CD4-positive, alpha-beta T cell (primary cell): ENCODE measurements at regions of chr19 and their contacts with region 1.

Region 1: GRCh38 chr19:18251587-18252369 is 22.5 kb downstream of the IQCN start:
- DNase-seq: peak; percentile 65 to 90 (median 81)
- ATAC-seq: peak; percentile 91
- H3K4me3 ChIP-seq: no peak overlapping the region
- H3K4me3 Mint-ChIP-seq: no peak overlapping the region
- H3K27ac ChIP-seq: no peak overlapping the region
- H3K27ac Mint-ChIP-seq: no peak overlapping the region
- H3K4me1 ChIP-seq: peaks cover 8% of the 10 kb centered on the region
- H3K4me1 Mint-ChIP-seq: no peaks in the 10 kb centered on the region
- H3K27me3 ChIP-seq: peaks cover 8 to 12% of the 10 kb centered on the region in 2 experiments
- H3K27me3 Mint-ChIP-seq: peaks cover 31% of the 10 kb centered on the region
- CTCF ChIP-seq: peak; percentile 80

Region 2: DNA sequence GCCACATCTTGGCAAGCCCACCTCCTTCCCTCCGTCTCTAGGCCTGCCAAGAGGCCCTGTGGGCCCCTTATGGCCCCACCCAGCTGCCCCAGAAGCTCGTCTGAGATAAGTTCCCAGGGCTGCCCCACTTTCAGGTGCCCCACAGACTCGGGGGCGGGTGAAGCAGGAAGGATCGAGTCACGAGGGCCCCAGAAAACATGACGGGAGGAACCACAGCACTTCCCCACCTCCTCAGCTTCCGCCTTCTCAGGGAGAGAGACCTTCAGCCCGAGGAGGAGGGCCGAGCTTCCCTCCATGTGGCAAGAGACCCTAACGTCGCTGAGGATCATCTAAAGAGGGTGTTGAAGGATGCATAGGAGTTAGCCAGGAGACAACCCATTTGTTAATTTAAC is 160.6 kb before region 1 on chr19:
- CTCF ChIA-PET with region 1: no interaction called
- POLR2A ChIA-PET with region 1: no interaction called
- intact Hi-C with region 1: no loop called
- DNase-seq: peak; percentile 55 to 94 (median 74)
- ATAC-seq: peak; percentile 69
- H3K4me3 ChIP-seq: no peak overlapping the region
- H3K4me3 Mint-ChIP-seq: peak overlapping the region; percentile 82
- H3K27ac ChIP-seq: peak overlapping the region; percentile 74 to 93
- H3K27ac Mint-ChIP-seq: peak overlapping the region; percentile 98
- H3K4me1 ChIP-seq: peaks cover 67% of the 10 kb centered on the region
- H3K4me1 Mint-ChIP-seq: peaks cover 58% of the 10 kb centered on the region
- H3K27me3 ChIP-seq: no peaks in the 10 kb centered on the region
- H3K27me3 Mint-ChIP-seq: no peaks in the 10 kb centered on the region
- CTCF ChIP-seq: no peak

Region 3: GRCh38 chr19:18160971-18161635 is 90.7 kb before region 1 on chr19:
- CTCF ChIA-PET with region 1: interaction called, 3 read pairs
- POLR2A ChIA-PET with region 1: no interaction called
- intact Hi-C with region 1: loop called (anchors 1 kb)
- DNase-seq: peak; percentile 58 to 92 (median 82)
- ATAC-seq: peak; percentile 99
- H3K4me3 ChIP-seq: peak overlapping the region; percentile 20
- H3K4me3 Mint-ChIP-seq: no peak overlapping the region
- H3K27ac ChIP-seq: no peak overlapping the region
- H3K27ac Mint-ChIP-seq: no peak overlapping the region
- H3K4me1 ChIP-seq: peaks cover 21% of the 10 kb centered on the region
- H3K4me1 Mint-ChIP-seq: peaks cover 12% of the 10 kb centered on the region
- H3K27me3 ChIP-seq: no peaks in the 10 kb centered on the region
- H3K27me3 Mint-ChIP-seq: no peaks in the 10 kb centered on the region
- CTCF ChIP-seq: peak; percentile 53